Activated naive CD4-positive, alpha-beta T cell treated with anti-CD3 and anti-CD28 coated beads for 36 hours (primary cell): ENCODE measurements at regions of chrX and their contacts with region 1.

Region 1: GRCh38 chrX:13717700-13718472 is 16.5 kb downstream of the TRAPPC2 start:
- DNase-seq: no peak
- H3K4me3 Mint-ChIP-seq: no peak overlapping the region
- H3K27ac Mint-ChIP-seq: no peak overlapping the region
- H3K4me1 Mint-ChIP-seq: peaks cover 18% of the 10 kb centered on the region
- H3K27me3 Mint-ChIP-seq: no peaks in the 10 kb centered on the region

Region 2: GRCh38 chrX:13700380-13700779 is 17.5 kb before region 1 on chrX:
- CTCF ChIA-PET with region 1: interaction called, 4 read pairs
- intact Hi-C with region 1: loop called (anchors 2 kb)
- DNase-seq: no peak
- H3K4me3 Mint-ChIP-seq: no peak overlapping the region
- H3K27ac Mint-ChIP-seq: no peak overlapping the region
- H3K4me1 Mint-ChIP-seq: peaks cover 68% of the 10 kb centered on the region
- H3K27me3 Mint-ChIP-seq: no peaks in the 10 kb centered on the region

Region 3: GRCh38 chrX:13734278-13735172 is 16.6 kb after region 1 on chrX and contains the starts of genes OFD1 and TRAPPC2:
- CTCF ChIA-PET with region 1: no interaction called
- intact Hi-C with region 1: loop called (anchors 2 kb)
- DNase-seq: peak; percentile 92
- H3K4me3 Mint-ChIP-seq: peak within 1 kb of the TSS; percentile 95
- H3K27ac Mint-ChIP-seq: peak within 1 kb of the TSS; percentile 92
- H3K4me1 Mint-ChIP-seq: peaks cover 43% of the 10 kb centered on the region
- H3K27me3 Mint-ChIP-seq: no peaks in the 10 kb centered on the region
- total RNA-seq, gene OFD1: 25.3 to 26.2 TPM
- total RNA-seq, gene TRAPPC2: 9.6 to 10.7 TPM